Right cardiac atrium (tissue), 5 donors: ENCODE measurements at regions of chr11 and their contacts with region 1.

Region 1: GRCh38 chr11:111299101-111300026 is 1.0 kb downstream of the POU2AF3 start:
- DNase-seq: peak; percentile 67 to 87 (median 84)
- ATAC-seq: peak; percentile 92 to 95
- H3K4me3 ChIP-seq: peak overlapping the region; percentile 57
- H3K27ac ChIP-seq: no peak overlapping the region
- H3K4me1 ChIP-seq: no peaks in the 10 kb centered on the region
- H3K27me3 ChIP-seq: no peaks in the 10 kb centered on the region

Region 2: GRCh38 chr11:111367411-111368284 is 68.3 kb after region 1 on chr11:
- intact Hi-C with region 1: no loop called
- DNase-seq: no peak
- ATAC-seq: no peak
- H3K4me3 ChIP-seq: no peak overlapping the region
- H3K27ac ChIP-seq: no peak overlapping the region
- H3K4me1 ChIP-seq: no peaks in the 10 kb centered on the region
- H3K27me3 ChIP-seq: no peaks in the 10 kb centered on the region

Region 3: DNA sequence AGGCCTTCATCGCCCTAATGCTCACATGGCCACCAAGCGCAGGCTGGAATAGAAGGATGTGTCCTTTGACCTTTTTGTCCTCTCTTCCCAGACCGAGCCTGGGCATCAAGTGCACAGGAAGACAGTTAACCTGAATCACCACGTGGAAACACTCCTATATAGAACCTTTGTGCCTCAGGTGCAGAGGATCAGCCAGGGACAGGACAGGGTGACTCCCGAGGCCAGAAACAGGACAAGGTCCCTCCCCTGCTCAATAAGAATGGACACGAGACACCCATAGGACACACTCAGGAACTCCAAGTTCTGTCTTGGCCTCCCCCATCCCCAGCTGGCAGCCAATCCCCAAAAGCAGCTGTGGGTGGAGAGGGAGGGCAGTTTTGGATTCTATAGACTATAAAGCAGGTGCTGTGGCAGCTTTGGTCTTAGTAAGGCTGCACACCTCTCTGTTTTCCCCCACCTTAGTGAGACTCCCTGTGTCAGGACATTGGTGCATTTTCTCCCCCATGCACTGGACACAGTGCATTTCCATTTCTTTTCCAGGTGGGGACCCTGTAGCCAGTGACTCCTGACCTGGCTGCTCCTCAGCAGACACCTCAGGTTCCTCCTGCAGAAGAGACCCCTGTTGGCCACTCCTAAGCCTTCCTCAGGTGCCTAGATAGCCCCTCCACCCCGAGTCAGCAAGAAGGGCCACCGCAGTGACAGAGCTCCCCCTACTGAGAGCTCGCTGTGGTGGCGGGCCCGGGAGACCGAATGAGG is 123.3 kb after region 1 on chr11:
- intact Hi-C with region 1: loop called in 1 of 4 experiments (anchors 5 kb)
- DNase-seq: peak; percentile 19 to 71 (median 70)
- ATAC-seq: peak; percentile 52 to 63
- H3K4me3 ChIP-seq: no peak overlapping the region
- H3K27ac ChIP-seq: no peak overlapping the region
- H3K4me1 ChIP-seq: no peaks in the 10 kb centered on the region
- H3K27me3 ChIP-seq: no peaks in the 10 kb centered on the region